Transverse colon (tissue), 4 donors: ENCODE measurements at regions of chr12 and their contacts with region 1.

Region 1: DNA sequence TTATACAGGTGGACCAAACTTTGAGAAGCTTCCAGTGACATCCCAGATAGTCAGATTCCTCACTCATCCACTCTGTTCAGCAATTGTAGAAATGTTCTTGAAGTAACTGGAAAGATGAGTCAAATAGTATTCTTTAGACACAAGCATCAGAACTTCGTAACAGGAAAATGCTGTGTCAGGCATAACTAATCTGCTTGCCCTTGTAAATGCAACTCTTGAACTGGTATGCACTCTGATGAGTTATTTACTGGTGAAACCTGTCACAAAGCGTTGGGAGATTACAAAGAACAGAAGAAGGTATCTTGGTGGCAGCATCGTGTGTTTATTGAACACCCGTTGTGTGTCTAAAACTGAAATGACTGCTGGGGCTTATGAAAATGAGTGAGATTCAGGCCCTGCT is 10.8 kb upstream of the DUSP6 start:
- DNase-seq: no peak
- H3K4me3 ChIP-seq: no peak overlapping the region
- H3K27ac ChIP-seq: no peak overlapping the region
- H3K4me1 ChIP-seq: peaks cover 0 to 5% (median 0%) of the 10 kb centered on the region in 4 donors
- H3K27me3 ChIP-seq: no peaks in the 10 kb centered on the region
- CTCF ChIP-seq: no peak
- EP300 ChIP-seq: no peak
- POLR2A ChIP-seq: no peak

Region 2: GRCh38 chr12:89040146-89040964 is 322.7 kb before region 1 on chr12:
- in situ Hi-C with region 1: no loop called
- intact Hi-C with region 1: loop called (anchors 10 kb)
- DNase-seq: peak; percentile 61
- H3K4me3 ChIP-seq: no peak overlapping the region
- H3K27ac ChIP-seq: no peak overlapping the region
- H3K4me1 ChIP-seq: no peaks in the 10 kb centered on the region
- H3K27me3 ChIP-seq: no peaks in the 10 kb centered on the region
- CTCF ChIP-seq: no peak
- EP300 ChIP-seq: no peak
- POLR2A ChIP-seq: no peak

Region 3: DNA sequence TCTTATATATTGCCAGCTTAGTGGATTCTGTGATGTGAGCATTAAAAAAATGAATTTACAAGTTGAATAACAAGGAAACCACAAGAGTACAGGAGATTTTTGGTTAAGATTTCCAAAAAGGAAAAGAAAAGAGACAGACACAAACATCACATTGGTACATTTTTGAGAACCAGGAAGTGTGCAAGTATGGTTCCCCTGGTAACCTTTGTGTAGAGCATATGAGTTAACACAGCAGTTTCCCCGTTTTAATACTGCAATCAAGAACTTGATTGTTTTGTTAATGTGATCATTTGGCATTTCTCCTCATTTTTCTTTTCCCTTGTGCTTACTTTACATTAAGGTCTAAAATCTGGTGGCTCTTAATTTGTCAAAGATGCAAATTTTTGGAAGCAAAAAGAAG is 835.9 kb after region 1 on chr12:
- in situ Hi-C with region 1: no loop called
- intact Hi-C with region 1: no loop called
- DNase-seq: no peak
- H3K4me3 ChIP-seq: no peak overlapping the region
- H3K27ac ChIP-seq: no peak overlapping the region
- H3K4me1 ChIP-seq: no peaks in the 10 kb centered on the region
- H3K27me3 ChIP-seq: no peaks in the 10 kb centered on the region
- CTCF ChIP-seq: no peak
- EP300 ChIP-seq: no peak
- POLR2A ChIP-seq: no peak